Kidney (tissue), 22 donors: ENCODE measurements at regions of chr19 and their contacts with region 1.

Region 1: GRCh38 chr19:5803752-5804515 is 933 bp upstream of the NRTN start:
- DNase-seq: peak; percentile 95 to 98 (median 96)
- H3K4me3 ChIP-seq: no peak overlapping the region
- H3K27ac ChIP-seq: no peak overlapping the region
- H3K4me1 ChIP-seq: peaks cover 0 to 10% (median 0%) of the 10 kb centered on the region in 3 donors
- H3K27me3 ChIP-seq: no peaks in the 10 kb centered on the region
- CTCF ChIP-seq: peak; percentile 95

Region 2: GRCh38 chr19:5891938-5892771 is 88.2 kb after region 1 on chr19:
- intact Hi-C with region 1: loop called (anchors 10 kb)
- DNase-seq: peak in 4 of 5 donors; percentile 79 to 88 (median 84)
- H3K4me3 ChIP-seq: no peak overlapping the region
- H3K27ac ChIP-seq: no peak overlapping the region
- H3K4me1 ChIP-seq: peaks cover 0 to 13% (median 9%) of the 10 kb centered on the region in 3 donors
- H3K27me3 ChIP-seq: no peaks in the 10 kb centered on the region
- CTCF ChIP-seq: peak; percentile 71

Region 3: GRCh38 chr19:6038634-6039405 is 234.9 kb after region 1 on chr19:
- intact Hi-C with region 1: no loop called
- DNase-seq: peak in 2 of 5 donors; percentile 5 to 12
- H3K4me3 ChIP-seq: no peak overlapping the region
- H3K27ac ChIP-seq: no peak overlapping the region
- H3K4me1 ChIP-seq: no peaks in the 10 kb centered on the region
- H3K27me3 ChIP-seq: no peaks in the 10 kb centered on the region
- CTCF ChIP-seq: no peak